ENCODE measurements at regions of chr1 and their contacts with region 1.

Region 1: DNA sequence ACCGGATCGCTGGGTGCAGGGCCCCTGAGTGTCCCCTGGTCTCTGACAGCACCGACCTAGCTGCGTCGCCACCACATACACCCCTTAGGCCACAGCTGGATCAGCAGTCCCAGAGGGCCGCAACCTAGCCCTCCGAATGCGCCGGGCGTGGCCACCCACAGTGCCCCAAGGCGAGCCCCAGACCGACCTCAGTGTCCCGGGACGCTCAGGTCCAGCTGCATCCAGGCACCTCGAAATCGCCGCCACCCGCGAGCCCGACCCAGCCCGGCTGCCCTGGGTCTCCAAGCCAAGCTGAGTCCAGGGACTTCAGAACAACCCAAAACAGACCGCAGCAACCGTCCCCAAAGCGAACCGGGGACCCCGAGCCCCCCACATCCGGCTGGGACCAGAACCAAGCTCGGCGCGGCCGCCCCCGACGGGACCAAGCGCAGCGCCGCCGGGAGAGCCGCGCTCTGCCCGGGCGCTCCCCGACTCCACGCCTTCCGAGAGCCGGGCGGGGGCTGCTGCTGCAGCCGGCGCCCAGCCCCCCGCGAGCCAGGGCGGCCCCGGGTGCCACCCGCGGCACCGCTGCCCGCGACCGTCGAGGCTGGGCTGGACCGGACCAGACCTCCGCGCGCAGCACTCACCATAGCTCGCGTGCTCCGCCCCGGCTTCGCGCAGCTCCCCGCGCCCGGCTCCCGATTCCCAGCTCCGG is 54.6 kb upstream of the ECE1 start:
- DNase-seq: peak; percentile 36
- H3K4me3 Mint-ChIP-seq: peak overlapping the region; percentile 83
- H3K27ac Mint-ChIP-seq: peak overlapping the region; percentile 88
- H3K4me1 Mint-ChIP-seq: peaks cover 41% of the 10 kb centered on the region
- H3K27me3 Mint-ChIP-seq: no peaks in the 10 kb centered on the region

Region 2: DNA sequence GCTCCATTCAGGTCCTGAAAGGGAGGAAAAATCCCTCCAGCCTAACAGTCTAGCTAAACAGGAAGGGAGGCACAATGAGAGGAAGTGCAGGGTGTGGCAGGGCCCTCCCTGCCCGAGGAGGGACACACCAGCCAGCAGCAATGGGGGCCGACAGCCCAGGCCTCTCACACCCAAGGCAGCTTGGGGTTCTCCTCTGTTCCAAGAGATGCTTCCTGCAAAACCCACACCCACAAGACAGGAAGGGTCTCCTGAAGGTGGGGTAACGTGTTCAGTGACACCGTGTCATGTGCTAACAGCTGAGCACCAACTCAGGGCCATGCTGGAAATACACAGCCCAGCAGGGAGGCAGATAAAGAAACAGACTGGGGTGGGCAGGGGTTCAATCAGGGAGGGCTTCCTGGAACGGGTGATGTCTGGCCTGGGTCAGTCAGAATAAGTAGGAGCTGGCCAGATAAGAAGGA is 64.9 kb before region 1 on chr1:
- CTCF ChIA-PET with region 1: interaction called, 4 read pairs
- POLR2A ChIA-PET with region 1: interaction called, 20 read pairs
- DNase-seq: peak; percentile 47
- H3K4me3 Mint-ChIP-seq: peak overlapping the region; percentile 71
- H3K27ac Mint-ChIP-seq: peak overlapping the region; percentile 93
- H3K4me1 Mint-ChIP-seq: peaks cover 58% of the 10 kb centered on the region
- H3K27me3 Mint-ChIP-seq: no peaks in the 10 kb centered on the region

Region 3: GRCh38 chr1:21324368-21325141 is 20.3 kb before region 1 on chr1:
- CTCF ChIA-PET with region 1: no interaction called
- POLR2A ChIA-PET with region 1: interaction called, 26 read pairs
- DNase-seq: peak; percentile 63
- H3K4me3 Mint-ChIP-seq: peak overlapping the region; percentile 40
- H3K27ac Mint-ChIP-seq: peak overlapping the region; percentile 72
- H3K4me1 Mint-ChIP-seq: peaks cover 67% of the 10 kb centered on the region
- H3K27me3 Mint-ChIP-seq: no peaks in the 10 kb centered on the region

Region 4: DNA sequence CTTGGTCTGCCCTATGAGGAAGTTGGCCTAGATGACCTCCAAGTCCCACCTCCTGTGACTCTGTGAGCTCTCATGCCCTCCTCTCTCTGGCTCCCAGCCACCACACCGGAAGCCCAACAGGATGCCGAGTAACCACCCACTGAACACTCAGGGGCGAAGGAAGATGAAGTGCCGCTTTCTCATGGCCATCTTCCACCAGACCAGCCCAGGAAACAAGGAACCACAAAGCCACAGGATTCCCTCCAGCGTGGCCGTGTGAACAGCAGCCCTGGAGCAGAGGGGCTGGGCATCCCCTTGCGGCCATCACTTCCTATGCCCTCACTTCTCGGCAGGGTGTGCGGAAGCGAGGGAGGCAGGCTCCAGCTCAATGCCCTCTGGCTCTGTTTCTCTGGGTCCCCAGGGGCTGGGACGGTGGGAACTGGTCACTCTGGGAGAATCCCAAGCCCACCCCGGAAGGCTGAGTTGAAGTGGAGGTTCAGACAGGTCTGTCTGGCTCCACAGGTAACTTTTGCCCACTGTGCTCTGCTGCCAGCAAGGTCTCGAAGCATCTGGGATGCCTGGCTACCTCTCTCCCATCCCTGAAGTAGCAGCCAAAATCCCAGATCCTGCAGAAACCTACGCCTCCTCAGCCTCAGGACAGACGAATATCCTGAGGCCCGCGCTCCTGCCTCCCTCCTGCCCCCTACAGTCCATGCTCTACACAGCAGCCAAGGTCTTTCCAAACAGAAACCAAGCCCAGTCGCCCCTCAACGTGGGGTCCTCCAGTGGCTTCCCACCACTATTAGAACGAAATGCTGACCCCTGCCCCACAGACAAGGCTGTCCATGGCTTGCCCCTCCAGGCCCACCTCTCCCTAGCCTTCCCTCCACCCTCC is 10.4 kb before region 1 on chr1:
- CTCF ChIA-PET with region 1: interaction called, 12 read pairs
- POLR2A ChIA-PET with region 1: interaction called, 40 read pairs
- DNase-seq: peak; percentile 89
- H3K4me3 Mint-ChIP-seq: peak overlapping the region; percentile 73
- H3K27ac Mint-ChIP-seq: peak overlapping the region; percentile 94
- H3K4me1 Mint-ChIP-seq: peaks cover 89% of the 10 kb centered on the region
- H3K27me3 Mint-ChIP-seq: no peaks in the 10 kb centered on the region